BJ (cell line): ENCODE measurements at regions of chr9 and their contacts with region 1.

Region 1: GRCh38 chr9:34222451-34222850 is 43.6 kb downstream of the UBAP1 start:
- DNase-seq: peak; percentile 41
- H3K4me3 ChIP-seq: no peak overlapping the region
- H3K27me3 ChIP-seq: no peaks in the 10 kb centered on the region
- CTCF ChIP-seq: no peak

Region 2: GRCh38 chr9:34190996-34191892 is 31.2 kb before region 1 on chr9:
- CTCF ChIA-PET with region 1: interaction called, 3 read pairs
- POLR2A ChIA-PET with region 1: interaction called, 10 read pairs
- DNase-seq: no peak
- H3K4me3 ChIP-seq: no peak overlapping the region
- H3K27me3 ChIP-seq: no peaks in the 10 kb centered on the region
- CTCF ChIP-seq: peak; percentile 39